Right cardiac atrium (tissue), 5 donors: ENCODE measurements at regions of chr7 and their contacts with region 1.

Region 1: GRCh38 chr7:50418086-50418515 is 32.0 kb downstream of the FIGNL1 start:
- DNase-seq: peak; percentile 70 to 88 (median 80)
- ATAC-seq: peak; percentile 92
- H3K4me3 ChIP-seq: no peak overlapping the region
- H3K27ac ChIP-seq: no peak overlapping the region
- H3K4me1 ChIP-seq: no peaks in the 10 kb centered on the region
- H3K27me3 ChIP-seq: no peaks in the 10 kb centered on the region

Region 2: GRCh38 chr7:50142425-50143017 is 275.6 kb before region 1 on chr7:
- intact Hi-C with region 1: loop called in 3 of 4 experiments (anchors 5 kb)
- DNase-seq: no peak
- ATAC-seq: no peak
- H3K4me3 ChIP-seq: no peak overlapping the region
- H3K27ac ChIP-seq: no peak overlapping the region
- H3K4me1 ChIP-seq: no peaks in the 10 kb centered on the region
- H3K27me3 ChIP-seq: no peaks in the 10 kb centered on the region

Region 3: DNA sequence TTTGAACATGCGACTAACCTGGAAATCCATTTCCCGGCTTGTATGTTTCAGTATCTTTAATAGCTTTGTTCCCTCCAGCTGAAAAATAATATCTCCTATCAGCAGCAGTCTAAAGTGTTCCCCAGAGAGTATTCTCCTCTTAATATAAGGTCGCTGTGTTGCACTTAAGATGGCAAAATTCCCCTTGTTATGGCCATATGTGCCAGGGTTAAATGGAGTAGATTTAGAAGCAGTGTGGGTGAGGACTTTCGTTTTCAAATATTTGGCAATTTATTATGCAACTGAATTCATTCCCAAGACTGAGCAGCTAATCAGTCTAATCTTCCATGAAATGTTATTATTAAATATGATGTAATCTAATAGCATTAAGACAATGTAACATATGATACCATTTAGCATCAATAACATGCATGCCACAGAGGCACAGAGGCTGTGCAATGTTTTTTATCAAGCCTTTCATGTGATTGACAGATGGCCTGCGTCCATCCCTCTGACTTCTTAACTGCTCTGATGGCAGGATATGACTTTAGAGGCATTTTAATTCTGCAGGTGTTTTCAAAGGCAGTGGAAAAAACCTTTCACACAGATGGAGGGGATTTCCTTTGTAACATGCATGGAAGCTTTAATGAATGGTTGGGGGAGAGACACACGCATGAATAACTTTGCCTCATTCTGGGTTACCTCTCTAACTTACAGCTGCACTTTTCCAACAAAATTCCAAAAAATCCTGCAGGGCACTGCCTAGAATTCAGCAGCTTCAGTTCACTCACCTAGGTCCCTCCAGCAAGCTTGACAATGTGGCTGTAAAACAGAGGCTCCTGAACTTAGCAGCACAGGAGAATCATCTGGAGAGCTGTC is 269.9 kb before region 1 on chr7:
- intact Hi-C with region 1: loop called in 3 of 4 experiments (anchors 5 kb)
- DNase-seq: no peak
- ATAC-seq: no peak
- H3K4me3 ChIP-seq: peak overlapping the region; percentile 13
- H3K27ac ChIP-seq: no peak overlapping the region
- H3K4me1 ChIP-seq: no peaks in the 10 kb centered on the region
- H3K27me3 ChIP-seq: no peaks in the 10 kb centered on the region

Region 4: DNA sequence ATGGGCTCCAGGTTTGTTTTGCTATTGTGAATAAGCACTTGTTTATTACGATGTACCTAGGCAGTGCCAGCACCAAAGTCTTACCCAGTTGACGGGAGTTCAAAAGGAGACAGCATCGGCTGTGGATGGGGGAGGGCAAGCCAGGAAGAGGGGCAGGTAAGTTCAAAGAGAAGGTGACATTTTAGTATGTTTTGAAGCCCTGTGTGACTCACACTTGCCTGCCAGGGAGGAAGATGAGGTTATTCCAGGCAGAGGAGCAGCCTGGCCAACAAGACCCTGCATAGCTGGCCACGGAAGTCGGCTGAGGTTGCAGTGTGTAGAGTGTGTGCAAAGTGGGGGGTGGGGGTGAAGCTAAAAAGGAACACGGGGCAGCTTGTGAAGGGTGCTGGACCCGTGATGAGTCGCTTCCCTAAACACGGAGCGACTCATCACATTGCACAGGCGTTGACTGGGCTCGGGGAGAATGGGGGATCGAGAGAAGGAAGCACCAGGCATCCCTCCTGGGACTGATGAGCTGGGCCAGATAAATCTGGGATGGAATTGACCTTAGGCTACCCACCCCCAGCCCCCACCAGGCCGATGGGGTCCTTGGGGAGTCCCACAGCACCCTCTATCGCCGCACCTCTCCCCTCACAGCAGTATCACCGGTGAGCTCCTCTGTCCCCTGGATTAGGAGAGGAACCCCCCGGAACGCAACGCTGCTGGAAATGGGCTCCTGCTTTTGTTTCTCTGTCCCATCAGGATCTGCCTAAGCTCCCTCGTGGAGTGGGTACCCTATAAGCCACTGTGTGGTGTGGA is 211.4 kb before region 1 on chr7:
- intact Hi-C with region 1: loop called in 2 of 4 experiments (anchors 5 to 10 kb)
- DNase-seq: no peak
- ATAC-seq: peak; percentile 31 to 58
- H3K4me3 ChIP-seq: no peak overlapping the region
- H3K27ac ChIP-seq: no peak overlapping the region
- H3K4me1 ChIP-seq: no peaks in the 10 kb centered on the region
- H3K27me3 ChIP-seq: no peaks in the 10 kb centered on the region

Region 5: GRCh38 chr7:50653126-50653864 is 235.2 kb after region 1 on chr7:
- intact Hi-C with region 1: no loop called
- DNase-seq: peak; percentile 78 to 91 (median 82)
- ATAC-seq: peak; percentile 87 to 88
- H3K4me3 ChIP-seq: no peak overlapping the region
- H3K27ac ChIP-seq: peak overlapping the region; percentile 88
- H3K4me1 ChIP-seq: peaks cover 33% of the 10 kb centered on the region
- H3K27me3 ChIP-seq: no peaks in the 10 kb centered on the region